Heart left ventricle (tissue), 16 donors: ENCODE measurements at regions of chr5 and their contacts with region 1.

Region 1: GRCh38 chr5:9490494-9491097 is 55.3 kb downstream of the SEMA5A start:
- DNase-seq: peak in 2 of 5 donors; percentile 25 to 35
- ATAC-seq: peak; percentile 78 to 91 (median 82)
- H3K4me3 ChIP-seq: no peak overlapping the region
- H3K27ac ChIP-seq: peak overlapping the region in 3 of 12 donors; percentile 1 to 49 (median 21)
- H3K4me1 ChIP-seq: peaks cover 0 to 18% (median 1%) of the 10 kb centered on the region in 12 donors
- H3K27me3 ChIP-seq: no peaks in the 10 kb centered on the region
- CTCF ChIP-seq: no peak
- POLR2A ChIP-seq: no peak

Region 2: DNA sequence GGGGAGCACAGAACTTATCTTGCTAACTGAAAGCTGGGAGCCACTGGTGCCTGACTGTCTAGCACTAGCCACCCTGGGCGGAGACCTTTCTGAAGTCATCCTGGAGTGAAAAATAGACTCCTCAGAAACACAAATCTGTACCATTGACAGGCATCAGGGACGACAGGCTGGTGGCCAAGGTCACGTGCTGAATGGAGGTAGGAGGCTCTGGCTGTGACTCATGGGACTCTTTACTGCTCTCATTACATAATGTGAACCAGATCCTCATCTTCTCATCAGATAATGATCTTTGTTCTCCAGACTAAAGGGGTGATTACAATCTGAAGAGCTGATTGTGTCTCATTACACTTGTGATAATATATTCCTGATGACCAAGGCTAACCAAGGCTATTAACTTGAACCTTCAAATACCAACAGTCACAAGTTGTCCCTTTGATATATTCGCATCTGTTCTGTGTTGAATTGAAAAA is 36.5 kb before region 1 on chr5:
- intact Hi-C with region 1: loop called in 1 of 10 experiments (anchors 5 kb)
- DNase-seq: no peak
- ATAC-seq: peak in 1 of 4 donors; percentile 23
- H3K4me3 ChIP-seq: no peak overlapping the region
- H3K27ac ChIP-seq: no peak overlapping the region
- H3K4me1 ChIP-seq: peaks cover 0 to 29% (median 11%) of the 10 kb centered on the region in 12 donors
- H3K27me3 ChIP-seq: no peaks in the 10 kb centered on the region
- CTCF ChIP-seq: no peak
- POLR2A ChIP-seq: no peak

Region 3: DNA sequence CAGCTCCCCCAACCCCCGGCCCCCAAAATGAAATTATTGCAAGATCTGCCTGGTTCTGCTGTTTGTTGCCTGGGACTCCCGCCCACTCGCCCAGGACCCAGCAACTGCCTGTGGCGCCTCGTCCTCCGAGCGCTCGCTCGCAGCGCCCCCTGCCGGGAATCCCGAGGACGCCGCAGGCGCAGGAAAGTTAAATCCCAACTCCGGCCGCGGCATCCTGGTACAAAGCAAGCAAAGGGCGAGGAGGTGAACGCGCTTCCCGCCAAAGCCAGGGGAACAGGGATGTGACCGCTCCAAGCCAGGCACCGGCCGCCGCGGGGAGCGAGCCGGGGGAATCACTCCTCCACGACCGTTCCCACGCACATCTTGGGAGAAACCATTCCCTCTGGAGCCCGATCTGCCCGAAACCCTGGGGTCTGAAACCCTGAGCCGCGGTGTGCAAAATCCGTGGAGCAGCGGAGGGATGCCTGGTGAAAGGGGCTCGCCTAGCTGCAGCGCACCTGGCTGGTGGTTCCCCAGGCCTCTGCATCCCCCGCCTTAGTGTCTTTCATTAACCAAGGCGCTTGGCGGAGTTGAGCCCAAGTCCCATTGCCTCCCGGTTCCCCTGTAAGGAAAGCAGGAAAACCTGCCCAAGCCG is 54.0 kb after region 1 on chr5:
- intact Hi-C with region 1: no loop called
- DNase-seq: peak; percentile 83 to 92 (median 86)
- ATAC-seq: peak; percentile 72 to 78 (median 76)
- H3K4me3 ChIP-seq: peak overlapping the region; percentile 65 to 94 (median 78)
- H3K27ac ChIP-seq: peak overlapping the region; percentile 34 to 94 (median 83)
- H3K4me1 ChIP-seq: peaks cover 0 to 57% (median 12%) of the 10 kb centered on the region in 12 donors
- H3K27me3 ChIP-seq: peaks cover 0 to 29% (median 0%) of the 10 kb centered on the region in 9 donors
- CTCF ChIP-seq: peak; percentile 69 to 91 (median 78)
- POLR2A ChIP-seq: peak in 1 of 2 donors; percentile 39